Activated T-helper 2 cell treated with anti-CD3 and anti-CD28 coated beads, Interferon-gamma antibody, Interleukin-2, Interleukin-4, amounts not matched to agents 10 μg/mL and 5 μg/mL and 100 μg/mL, durations not matched to agents 14 hours and 24 hours and 36 hours (primary cell): ENCODE measurements at regions of chr12 and their contacts with region 1.

Region 1: DNA sequence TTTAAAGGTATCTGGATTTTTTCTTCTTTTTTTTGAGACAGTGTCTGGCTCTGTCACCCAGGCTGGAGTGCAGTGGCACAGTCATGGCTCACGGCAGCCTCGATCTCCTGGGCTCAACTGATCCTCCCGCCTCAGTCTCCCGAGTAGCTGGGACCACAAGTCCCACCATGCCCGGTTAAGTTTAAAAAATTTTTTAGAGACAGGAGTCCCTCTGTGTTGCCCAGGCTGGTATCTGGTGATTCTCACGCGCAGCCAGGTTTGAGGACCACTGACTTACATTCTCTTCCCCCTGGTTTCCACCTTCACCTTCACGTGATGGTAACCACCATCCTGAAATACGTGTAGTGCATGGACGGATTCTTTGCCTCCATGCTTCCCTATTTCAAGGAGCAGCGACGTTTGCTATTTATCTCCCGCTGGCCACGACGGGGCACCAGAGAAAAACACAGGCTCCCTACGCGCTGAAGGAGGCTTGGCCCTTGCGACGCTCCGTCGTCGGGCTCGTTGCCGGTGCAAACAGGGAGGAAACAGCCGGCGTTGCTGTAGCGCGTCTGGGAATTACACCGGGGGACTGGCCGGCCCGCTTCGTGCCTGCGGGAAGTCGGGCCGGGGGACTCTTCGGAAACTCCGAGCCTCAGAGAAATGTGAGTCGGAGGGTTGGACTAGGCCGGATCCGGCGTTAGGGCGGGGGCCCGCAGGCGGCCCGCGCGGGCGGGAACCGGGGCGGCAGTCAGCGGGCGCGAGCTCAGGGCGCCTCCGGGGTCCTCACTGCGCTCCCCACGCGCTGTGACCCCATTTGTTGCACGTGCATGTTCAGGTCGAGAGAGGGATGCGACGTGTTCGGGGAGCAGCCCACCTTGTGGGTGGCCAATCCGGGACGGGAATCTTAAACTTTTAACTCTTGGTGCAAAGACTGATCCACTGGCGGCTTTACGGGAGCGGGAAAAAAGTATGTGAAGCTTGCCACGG is at the start of gene TCHP:
- DNase-seq: peak; percentile 69
- H3K4me3 Mint-ChIP-seq: peak within 1 kb of the TSS; percentile 96
- H3K27ac Mint-ChIP-seq: peak within 1 kb of the TSS; percentile 98
- H3K4me1 Mint-ChIP-seq: peaks cover 15% of the 10 kb centered on the region
- H3K27me3 Mint-ChIP-seq: no peaks in the 10 kb centered on the region
- total RNA-seq, gene TCHP: 26.0 and 32.6 TPM in 2 replicates

Region 2: DNA sequence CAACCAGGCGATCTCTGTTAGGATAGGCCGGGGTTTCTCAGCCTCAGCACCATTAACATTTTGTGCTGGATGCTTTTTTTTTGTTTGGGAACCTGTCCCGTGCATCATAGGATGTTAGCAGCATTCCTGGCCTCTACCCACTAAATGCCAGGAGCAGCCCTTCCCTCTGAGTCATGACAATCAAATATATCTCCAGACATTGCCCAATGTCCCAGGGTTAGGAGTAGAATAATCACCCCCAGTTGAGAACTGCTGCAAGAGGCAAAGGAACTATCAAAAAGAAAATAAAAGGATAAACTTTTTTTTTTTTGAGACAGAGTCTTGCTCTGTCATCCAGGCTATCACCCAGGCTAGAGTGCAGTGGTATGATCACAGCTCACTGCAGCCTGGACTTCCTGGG is 707.7 kb before region 1 on chr12:
- intact Hi-C with region 1: no loop called
- DNase-seq: no peak
- H3K4me3 Mint-ChIP-seq: no peak overlapping the region
- H3K27ac Mint-ChIP-seq: no peak overlapping the region
- H3K4me1 Mint-ChIP-seq: no peaks in the 10 kb centered on the region
- H3K27me3 Mint-ChIP-seq: no peaks in the 10 kb centered on the region

Region 3: DNA sequence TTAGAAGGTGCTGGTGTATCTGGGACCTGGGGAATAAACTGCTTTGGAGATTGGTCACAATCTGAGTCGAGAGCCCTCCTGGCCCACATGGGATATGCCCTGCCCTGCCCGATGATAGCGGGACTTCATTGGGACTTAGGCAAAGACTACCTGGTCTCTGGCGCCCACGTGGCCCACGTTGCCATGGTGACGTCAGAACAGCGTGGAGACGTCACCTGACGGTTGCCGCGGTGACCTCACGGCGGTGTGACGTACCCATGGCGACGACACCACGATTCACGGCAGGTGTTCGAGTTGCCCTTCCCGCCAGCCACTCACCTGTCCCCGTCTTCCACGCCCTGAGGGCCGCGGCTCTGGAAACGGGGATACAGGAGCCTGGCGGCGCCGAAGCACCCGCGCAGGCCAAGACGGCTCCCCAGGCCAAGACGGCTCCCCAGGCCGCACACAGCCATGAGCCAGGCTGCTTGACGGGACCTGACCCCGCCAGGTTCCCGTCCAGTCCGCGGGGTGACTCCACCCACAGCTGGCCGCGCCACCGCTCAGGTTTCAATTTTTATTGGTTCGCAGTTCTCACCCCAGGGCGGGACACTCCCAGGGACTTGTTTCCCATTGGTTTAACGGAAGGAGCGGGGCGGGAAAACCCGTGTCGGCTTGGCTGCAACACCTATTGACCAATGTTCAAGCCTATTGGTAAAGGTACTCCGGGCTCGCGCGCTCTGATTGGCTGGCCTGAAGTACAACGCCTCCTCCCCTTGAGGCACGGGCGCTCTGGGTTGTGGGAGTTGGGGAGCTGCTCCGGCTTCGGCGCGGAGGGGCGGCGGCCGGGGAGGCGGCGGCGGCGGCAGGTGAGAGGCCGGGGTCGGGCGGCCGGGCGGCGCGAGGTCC is 326.8 kb before region 1 on chr12 and contains the starts of genes MMAB and MVK:
- intact Hi-C with region 1: loop called (anchors 5 kb)
- DNase-seq: peak; percentile 99
- H3K4me3 Mint-ChIP-seq: peak within 1 kb of the TSS; percentile 93
- H3K27ac Mint-ChIP-seq: peak within 1 kb of the TSS; percentile 92
- H3K4me1 Mint-ChIP-seq: peaks cover 30% of the 10 kb centered on the region
- H3K27me3 Mint-ChIP-seq: no peaks in the 10 kb centered on the region
- total RNA-seq, gene MMAB: 56.7 and 59.0 TPM in 2 replicates
- total RNA-seq, gene MVK: 28.7 and 33.6 TPM in 2 replicates

Region 4: DNA sequence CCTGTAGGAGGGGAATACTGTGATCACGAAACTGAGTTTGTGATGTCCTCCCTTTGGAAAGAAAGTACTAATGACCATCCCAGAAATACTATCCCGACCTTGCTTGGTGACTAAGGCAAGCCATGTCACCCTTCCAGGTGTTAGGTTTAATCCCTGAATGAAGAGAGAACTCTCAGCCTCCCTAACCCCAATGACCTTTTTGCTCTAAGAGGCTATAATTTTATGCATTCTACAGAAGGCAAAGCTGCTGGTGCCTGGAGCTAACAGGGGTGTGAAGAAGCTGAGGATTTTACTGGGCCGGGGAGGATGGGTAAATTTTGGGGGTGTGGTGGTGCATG is 156.0 kb after region 1 on chr12:
- intact Hi-C with region 1: no loop called
- DNase-seq: no peak
- H3K4me3 Mint-ChIP-seq: no peak overlapping the region
- H3K27ac Mint-ChIP-seq: peak overlapping the region; percentile 95
- H3K4me1 Mint-ChIP-seq: peaks cover 50% of the 10 kb centered on the region
- H3K27me3 Mint-ChIP-seq: no peaks in the 10 kb centered on the region

Region 5: DNA sequence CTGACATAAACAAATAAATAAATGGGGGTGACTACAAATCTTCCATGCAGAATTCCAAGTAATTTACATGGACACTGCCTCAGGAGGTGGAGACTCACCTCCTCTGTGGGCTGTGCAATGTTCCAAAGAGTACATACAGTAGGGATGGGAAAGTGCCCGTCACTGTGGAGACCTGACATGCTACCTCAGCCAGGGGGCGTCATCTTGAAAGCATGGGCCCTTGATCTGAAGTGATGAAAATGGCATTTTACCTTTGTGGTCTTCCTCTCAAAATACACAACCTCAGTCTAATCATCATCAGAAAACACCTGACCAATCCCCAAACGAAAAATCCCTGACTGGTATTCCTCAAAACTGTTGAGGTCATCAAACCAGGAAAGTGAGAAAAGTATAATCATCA is 455.0 kb after region 1 on chr12:
- intact Hi-C with region 1: no loop called
- DNase-seq: no peak
- H3K4me3 Mint-ChIP-seq: no peak overlapping the region
- H3K27ac Mint-ChIP-seq: no peak overlapping the region
- H3K4me1 Mint-ChIP-seq: peaks cover 25% of the 10 kb centered on the region
- H3K27me3 Mint-ChIP-seq: no peaks in the 10 kb centered on the region